Caco-2 (cell line): ENCODE measurements at regions of chr10 and their contacts with region 1.

Region 1: GRCh38 chr10:68600041-68600778 is 40.1 kb downstream of the TET1 start:
- DNase-seq: peak; percentile 85
- H3K4me3 ChIP-seq: peak overlapping the region; percentile 45
- H3K4me3 Mint-ChIP-seq: peak overlapping the region; percentile 82
- H3K27ac Mint-ChIP-seq: peak overlapping the region; percentile 90
- H3K4me1 ChIP-seq: peaks cover 41% of the 10 kb centered on the region
- H3K4me1 Mint-ChIP-seq: peaks cover 35% of the 10 kb centered on the region
- H3K27me3 ChIP-seq: no peaks in the 10 kb centered on the region
- H3K27me3 Mint-ChIP-seq: no peaks in the 10 kb centered on the region
- CTCF ChIP-seq: no peak

Region 2: DNA sequence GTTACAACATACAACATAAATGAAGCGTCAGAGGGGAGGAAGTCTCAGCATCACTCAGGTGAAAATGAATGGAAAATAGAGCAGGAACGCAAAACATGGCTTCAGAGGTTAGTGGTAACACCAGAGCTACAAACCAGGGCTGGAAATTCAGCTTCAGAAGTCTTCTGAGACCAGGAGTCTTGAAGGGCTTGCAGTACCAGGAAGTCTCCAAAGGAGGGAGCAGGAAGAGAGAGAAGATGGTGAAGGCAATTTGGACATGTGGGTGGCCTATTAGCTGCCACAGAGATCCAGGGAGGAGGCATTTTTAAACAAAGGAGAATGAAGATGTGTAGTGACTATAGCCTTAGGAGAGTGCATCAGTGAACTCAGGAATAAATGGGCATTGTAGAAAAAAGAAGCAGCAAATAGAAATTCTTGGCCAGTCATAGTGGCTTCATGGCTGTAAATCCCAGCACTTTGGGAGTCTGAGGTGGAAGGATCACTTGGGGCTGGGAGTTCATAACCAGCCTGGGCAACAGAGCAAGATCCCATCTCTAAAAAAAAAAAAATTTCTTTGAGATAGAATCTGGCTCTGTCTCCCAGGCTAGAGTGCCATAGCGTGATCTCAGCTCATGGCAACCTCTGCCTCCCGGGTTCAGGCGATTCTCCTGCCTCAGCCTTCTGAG is 49.3 kb before region 1 on chr10:
- CTCF ChIA-PET with region 1: interaction called, 4 read pairs
- POLR2A ChIA-PET with region 1: no interaction called
- intact Hi-C with region 1: loop called (anchors 2 kb)
- DNase-seq: peak; percentile 84
- H3K4me3 ChIP-seq: no peak overlapping the region
- H3K4me3 Mint-ChIP-seq: no peak overlapping the region
- H3K27ac Mint-ChIP-seq: no peak overlapping the region
- H3K4me1 ChIP-seq: peaks cover 18% of the 10 kb centered on the region; the same call in 1 of the 2 replicates
- H3K4me1 Mint-ChIP-seq: peaks cover 14% of the 10 kb centered on the region
- H3K27me3 ChIP-seq: no peaks in the 10 kb centered on the region
- H3K27me3 Mint-ChIP-seq: no peaks in the 10 kb centered on the region
- CTCF ChIP-seq: peak; percentile 92 to 97

Region 3: GRCh38 chr10:68560186-68560942 is 39.8 kb before region 1 on chr10 and contains the start of gene TET1:
- CTCF ChIA-PET with region 1: interaction called, 3 read pairs
- POLR2A ChIA-PET with region 1: interaction called, 26 read pairs
- intact Hi-C with region 1: loop called (anchors 1 kb)
- DNase-seq: peak; percentile 88 to 91
- H3K4me3 ChIP-seq: peak within 1 kb of the TSS; percentile 93
- H3K4me3 Mint-ChIP-seq: peak within 1 kb of the TSS; percentile 76
- H3K27ac Mint-ChIP-seq: peak within 1 kb of the TSS; percentile 3
- H3K4me1 ChIP-seq: peaks cover 10% of the 10 kb centered on the region; the same call in 1 of the 2 replicates
- H3K4me1 Mint-ChIP-seq: peaks cover 16% of the 10 kb centered on the region
- H3K27me3 ChIP-seq: no peaks in the 10 kb centered on the region
- H3K27me3 Mint-ChIP-seq: no peaks in the 10 kb centered on the region
- CTCF ChIP-seq: no peak
- total RNA-seq, gene TET1: 18.6 and 19.1 TPM in 2 replicates

Region 4: GRCh38 chr10:68628576-68629127 is 28.4 kb after region 1 on chr10:
- CTCF ChIA-PET with region 1: no interaction called
- POLR2A ChIA-PET with region 1: no interaction called
- intact Hi-C with region 1: no loop called
- DNase-seq: no peak
- H3K4me3 ChIP-seq: no peak overlapping the region
- H3K4me3 Mint-ChIP-seq: no peak overlapping the region
- H3K27ac Mint-ChIP-seq: no peak overlapping the region
- H3K4me1 ChIP-seq: peaks cover 16% of the 10 kb centered on the region
- H3K4me1 Mint-ChIP-seq: peaks cover 20% of the 10 kb centered on the region
- H3K27me3 ChIP-seq: no peaks in the 10 kb centered on the region
- H3K27me3 Mint-ChIP-seq: no peaks in the 10 kb centered on the region
- CTCF ChIP-seq: no peak